Cardiac septum (tissue), 1 donor: ENCODE measurements at regions of chr7 and their contacts with region 1.

Region 1: DNA sequence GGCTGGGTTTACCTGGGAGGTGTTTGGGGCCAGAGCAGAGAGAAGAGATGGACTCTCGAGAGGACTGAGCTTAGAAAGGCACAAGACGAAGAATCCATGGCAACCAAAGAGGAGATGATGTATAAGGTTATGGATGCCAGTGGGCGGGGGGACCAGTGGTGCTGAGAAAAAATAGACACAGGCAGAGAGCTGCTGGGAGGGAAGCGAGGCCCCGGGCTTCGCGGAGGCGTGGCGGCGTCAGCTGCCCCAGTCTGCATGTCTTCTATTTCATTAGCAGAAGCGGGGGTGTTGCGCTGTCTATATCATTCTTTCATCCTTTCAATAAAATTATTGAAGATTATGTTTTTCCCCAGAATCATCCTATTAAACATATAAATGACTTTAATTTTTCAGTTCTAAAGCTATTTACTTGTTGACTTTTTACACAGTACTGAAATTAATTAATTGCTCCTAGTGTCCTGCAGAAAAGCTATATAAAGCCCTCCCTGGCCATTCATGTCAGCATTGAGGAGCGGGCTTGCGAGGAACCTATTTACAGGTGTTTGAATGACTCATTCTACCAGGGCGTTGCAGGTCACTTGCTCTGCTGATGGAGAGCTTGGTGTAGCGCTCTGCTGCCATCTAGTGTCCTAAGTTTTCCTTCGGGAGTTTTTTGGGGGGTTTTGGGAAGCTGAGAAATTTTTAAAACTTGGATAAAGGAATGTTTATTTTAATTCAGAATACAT is 42.9 kb upstream of the BHLHA15 start:
- DNase-seq: no peak

Region 2: GRCh38 chr7:98021588-98022351 is 146.6 kb before region 1 on chr7:
- intact Hi-C with region 1: loop called (anchors 1 kb)
- DNase-seq: peak; percentile 89

Region 3: DNA sequence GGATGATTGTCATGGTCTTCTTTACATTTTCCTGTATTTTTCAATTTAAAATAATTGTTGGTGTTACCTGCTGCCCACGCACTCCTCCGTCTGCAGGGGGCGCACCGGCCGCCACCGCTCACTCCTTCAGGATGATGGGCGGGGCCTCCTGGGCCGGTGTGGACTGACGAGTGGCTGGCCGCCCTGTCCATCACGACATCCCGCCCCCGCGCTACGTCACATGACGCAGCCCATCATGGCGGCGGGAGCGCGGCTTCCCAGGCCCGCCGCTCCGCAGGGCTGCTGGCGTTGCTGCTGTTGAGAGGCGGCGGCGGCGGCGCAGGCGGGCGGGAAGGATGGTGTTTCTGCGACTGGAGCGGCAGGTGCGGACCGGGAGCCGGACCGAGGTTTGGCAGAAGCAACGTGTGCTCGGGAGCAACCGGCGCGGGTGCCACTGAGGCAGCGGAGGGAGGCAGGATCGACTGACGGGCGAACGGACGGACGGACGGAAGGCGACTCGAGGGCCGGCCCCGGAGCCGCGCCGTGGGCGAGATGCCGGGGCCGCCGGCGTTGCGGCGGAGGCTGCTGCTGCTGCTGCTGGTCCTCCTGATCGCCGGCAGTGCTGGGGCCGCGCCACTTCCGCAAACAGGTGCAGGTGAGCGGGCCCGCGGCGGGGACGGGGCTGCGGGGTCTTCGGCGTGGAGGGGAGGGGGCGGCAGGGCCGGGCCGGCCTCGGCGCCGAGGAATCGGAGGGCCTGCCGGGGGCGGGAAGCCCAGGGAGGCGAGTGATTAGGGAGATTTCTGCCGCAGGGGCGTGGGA is 61.5 kb before region 1 on chr7 and contains the start of gene LMTK2:
- intact Hi-C with region 1: loop called (anchors 1 kb)
- DNase-seq: peak; percentile 97
- total RNA-seq, gene LMTK2: 28.3 TPM